Endothelial cell of umbilical vein (primary cell): ENCODE measurements at regions of chr7 and their contacts with region 1.

Region 1: GRCh38 chr7:11212080-11212711 is 238.5 kb downstream of the PHF14 start:
- DNase-seq: peak; percentile 63
- H3K4me3 ChIP-seq: no peak overlapping the region
- H3K27ac ChIP-seq: no peak overlapping the region
- H3K4me1 ChIP-seq: no peaks in the 10 kb centered on the region
- H3K27me3 ChIP-seq: no peaks in the 10 kb centered on the region
- CTCF ChIP-seq: peak; percentile 49 to 74
- POLR2A ChIP-seq: no peak

Region 2: DNA sequence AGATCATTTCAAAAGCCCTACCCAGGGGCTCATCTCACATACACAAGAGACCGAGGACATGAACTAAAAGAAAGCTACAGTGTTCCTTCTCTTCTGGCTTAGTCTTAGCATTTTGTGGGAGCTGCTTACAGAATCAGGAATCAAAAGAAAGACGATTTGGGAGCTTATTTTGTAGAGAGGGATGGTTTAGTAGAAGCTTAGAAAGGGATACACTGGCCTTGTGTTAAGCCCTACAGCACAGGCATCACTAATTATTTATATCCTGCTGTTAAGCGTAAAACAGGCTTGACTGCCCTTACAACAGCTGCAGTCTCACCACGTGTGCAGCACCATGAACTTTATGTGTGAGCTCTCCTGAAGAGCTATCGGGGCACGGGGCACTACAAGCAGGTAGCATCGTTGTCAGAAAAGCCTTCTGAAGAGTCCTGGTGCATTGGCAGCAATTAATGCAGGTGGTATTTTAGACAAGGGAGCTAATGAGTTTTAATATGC is 1980.5 kb before region 1 on chr7:
- CTCF ChIA-PET with region 1: no interaction called
- POLR2A ChIA-PET with region 1: no interaction called
- dilution Hi-C with region 1: no loop called
- intact Hi-C with region 1: no loop called
- DNase-seq: no peak
- H3K4me3 ChIP-seq: no peak overlapping the region
- H3K27ac ChIP-seq: no peak overlapping the region
- H3K4me1 ChIP-seq: no peaks in the 10 kb centered on the region
- H3K27me3 ChIP-seq: no peaks in the 10 kb centered on the region
- CTCF ChIP-seq: no peak
- POLR2A ChIP-seq: no peak

Region 3: DNA sequence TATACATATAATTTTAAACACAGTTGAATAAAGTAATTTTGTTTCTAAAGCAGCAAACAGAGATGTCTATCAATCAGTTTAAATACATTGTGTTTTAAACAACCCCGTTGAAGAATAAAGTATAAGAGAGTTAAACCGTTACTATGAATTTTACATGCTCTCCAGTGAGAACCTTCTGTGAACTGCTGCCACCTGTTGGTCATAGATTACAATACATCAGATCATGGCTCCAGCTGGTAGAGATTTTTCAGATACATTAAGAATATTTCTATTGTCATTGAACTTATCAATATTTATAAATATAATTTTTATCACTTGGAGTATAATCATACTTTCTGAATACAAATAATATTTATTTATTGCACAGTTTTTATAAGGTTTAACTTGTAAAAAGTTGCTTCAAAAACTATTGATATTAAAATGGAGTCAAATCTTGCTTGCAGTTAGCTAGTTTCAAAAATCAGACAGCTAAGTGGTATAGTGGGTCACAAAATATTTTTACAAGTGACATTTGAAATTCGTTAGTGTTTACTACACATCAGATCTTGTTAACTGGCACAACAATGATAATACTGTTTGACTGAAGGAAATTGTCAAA is 799.7 kb before region 1 on chr7:
- CTCF ChIA-PET with region 1: interaction called, 12 read pairs
- POLR2A ChIA-PET with region 1: no interaction called
- dilution Hi-C with region 1: no loop called
- intact Hi-C with region 1: loop called (anchors 1 kb)
- DNase-seq: peak; percentile 59
- H3K4me3 ChIP-seq: no peak overlapping the region
- H3K27ac ChIP-seq: no peak overlapping the region
- H3K4me1 ChIP-seq: no peaks in the 10 kb centered on the region
- H3K27me3 ChIP-seq: no peaks in the 10 kb centered on the region
- CTCF ChIP-seq: peak; percentile 32 to 43
- POLR2A ChIP-seq: no peak

Region 4: GRCh38 chr7:10889266-10889898 is 322.8 kb before region 1 on chr7:
- CTCF ChIA-PET with region 1: interaction called, 20 read pairs
- POLR2A ChIA-PET with region 1: no interaction called
- dilution Hi-C with region 1: no loop called
- intact Hi-C with region 1: loop called (anchors 1 kb)
- DNase-seq: peak; percentile 48
- H3K4me3 ChIP-seq: no peak overlapping the region
- H3K27ac ChIP-seq: no peak overlapping the region
- H3K4me1 ChIP-seq: no peaks in the 10 kb centered on the region
- H3K27me3 ChIP-seq: no peaks in the 10 kb centered on the region
- CTCF ChIP-seq: peak; percentile 71
- POLR2A ChIP-seq: no peak

Region 5: DNA sequence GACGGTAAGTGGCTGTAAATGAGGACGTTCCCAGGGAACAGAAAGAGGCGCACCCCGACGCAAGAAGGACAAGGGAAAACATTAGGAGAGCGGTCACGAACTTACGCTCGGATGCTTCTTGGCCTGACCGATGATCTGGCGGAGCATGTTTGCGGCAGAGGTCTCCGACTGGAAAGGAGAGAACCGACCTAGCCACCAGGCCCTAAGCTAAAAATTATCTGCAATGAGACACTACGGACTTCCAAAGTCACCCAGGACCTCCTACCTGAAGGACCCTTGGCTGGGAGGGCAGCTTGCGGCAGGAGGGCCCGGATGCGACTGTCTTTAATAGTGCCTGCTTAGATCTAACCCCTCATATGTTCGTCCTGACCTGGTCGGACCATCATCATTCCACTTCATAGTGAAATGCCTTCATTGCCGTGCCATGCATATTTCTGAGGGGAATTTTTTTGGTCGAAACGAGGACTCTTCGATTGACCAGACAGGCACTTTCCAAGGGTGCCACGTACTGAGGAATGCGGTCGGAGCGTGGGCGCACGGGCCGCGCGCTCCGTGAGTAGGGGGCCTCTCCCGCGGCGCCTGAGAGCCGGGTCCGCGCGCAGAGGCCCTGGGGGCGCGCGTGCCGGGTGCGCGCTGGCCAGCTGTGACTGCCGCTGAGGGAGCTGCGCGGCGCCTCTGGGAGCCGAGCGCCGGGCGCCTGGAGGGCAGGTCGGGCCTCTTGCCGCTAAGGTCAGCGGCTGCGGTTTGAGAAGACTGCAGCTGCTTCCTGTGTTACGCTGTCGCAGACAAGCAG is 272.1 kb before region 1 on chr7:
- CTCF ChIA-PET with region 1: interaction called, 15 read pairs
- POLR2A ChIA-PET with region 1: no interaction called
- dilution Hi-C with region 1: no loop called
- intact Hi-C with region 1: loop called (anchors 1 kb)
- DNase-seq: peak; percentile 96
- H3K4me3 ChIP-seq: peak overlapping the region; percentile 88 to 95 (median 91)
- H3K27ac ChIP-seq: peak overlapping the region; percentile 99
- H3K4me1 ChIP-seq: peaks cover 16% of the 10 kb centered on the region
- H3K27me3 ChIP-seq: no peaks in the 10 kb centered on the region
- CTCF ChIP-seq: no peak
- POLR2A ChIP-seq: peak; percentile 96

Region 6: GRCh38 chr7:10973061-10973944 is 238.9 kb before region 1 on chr7 and contains the start of gene PHF14:
- CTCF ChIA-PET with region 1: interaction called, 5 read pairs
- POLR2A ChIA-PET with region 1: no interaction called
- dilution Hi-C with region 1: no loop called
- intact Hi-C with region 1: loop called (anchors 1 kb)
- DNase-seq: peak; percentile 98
- H3K4me3 ChIP-seq: peak within 1 kb of the TSS; percentile 47 to 84 (median 80)
- H3K27ac ChIP-seq: peak within 1 kb of the TSS; percentile 64
- H3K4me1 ChIP-seq: peaks cover 19% of the 10 kb centered on the region
- H3K27me3 ChIP-seq: peaks cover 7% of the 10 kb centered on the region in 2 experiments
- CTCF ChIP-seq: no peak
- POLR2A ChIP-seq: peak; percentile 86
- total RNA-seq, gene PHF14: 38.6 and 43.4 TPM in 2 replicates

Region 7: GRCh38 chr7:11224535-11224934 is 12.3 kb after region 1 on chr7:
- CTCF ChIA-PET with region 1: interaction called, 13 read pairs
- POLR2A ChIA-PET with region 1: no interaction called
- dilution Hi-C with region 1: no loop called
- intact Hi-C with region 1: no loop called
- DNase-seq: no peak
- H3K4me3 ChIP-seq: no peak overlapping the region
- H3K27ac ChIP-seq: no peak overlapping the region
- H3K4me1 ChIP-seq: no peaks in the 10 kb centered on the region
- H3K27me3 ChIP-seq: no peaks in the 10 kb centered on the region
- CTCF ChIP-seq: no peak
- POLR2A ChIP-seq: no peak

Region 8: DNA sequence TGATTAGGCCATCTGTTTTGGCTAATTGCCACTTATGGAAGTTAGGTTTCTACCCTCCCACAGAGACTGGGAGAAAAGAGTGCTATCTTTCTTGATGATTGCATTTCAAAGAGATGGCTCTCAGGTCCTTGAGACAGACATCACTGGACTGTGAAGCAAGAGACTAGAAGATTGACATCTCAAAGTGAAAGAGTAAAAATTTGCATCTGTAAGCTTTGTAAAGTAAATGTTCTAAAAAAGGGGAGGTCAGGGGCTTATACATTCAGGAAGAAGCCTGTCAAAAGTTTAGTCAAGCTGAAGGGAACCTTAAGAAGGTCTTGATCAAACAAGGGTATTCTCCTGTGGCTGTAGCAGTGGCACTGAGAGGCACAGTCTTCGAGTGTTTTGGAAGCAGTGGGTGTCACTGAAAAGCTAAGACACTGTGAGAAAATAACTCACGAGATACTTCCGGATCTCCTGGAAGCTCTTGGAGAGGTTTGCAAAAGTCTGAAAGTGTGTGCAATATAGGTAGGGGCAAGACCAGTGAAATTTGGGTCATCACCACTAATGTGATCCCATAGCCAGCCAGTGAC is 103.6 kb after region 1 on chr7:
- CTCF ChIA-PET with region 1: no interaction called
- POLR2A ChIA-PET with region 1: no interaction called
- dilution Hi-C with region 1: no loop called
- intact Hi-C with region 1: no loop called
- DNase-seq: no peak
- H3K4me3 ChIP-seq: no peak overlapping the region
- H3K27ac ChIP-seq: no peak overlapping the region
- H3K4me1 ChIP-seq: no peaks in the 10 kb centered on the region
- H3K27me3 ChIP-seq: no peaks in the 10 kb centered on the region
- CTCF ChIP-seq: no peak
- POLR2A ChIP-seq: no peak

Region 9: GRCh38 chr7:11343818-11344413 is 131.7 kb after region 1 on chr7:
- CTCF ChIA-PET with region 1: no interaction called
- POLR2A ChIA-PET with region 1: no interaction called
- dilution Hi-C with region 1: no loop called
- intact Hi-C with region 1: loop called (anchors 5 kb)
- DNase-seq: peak; percentile 60
- H3K4me3 ChIP-seq: no peak overlapping the region
- H3K27ac ChIP-seq: no peak overlapping the region
- H3K4me1 ChIP-seq: no peaks in the 10 kb centered on the region
- H3K27me3 ChIP-seq: peaks cover 0 to 2% of the 10 kb centered on the region in 2 experiments
- CTCF ChIP-seq: peak; percentile 45 to 50
- POLR2A ChIP-seq: no peak